ENCODE measurements at regions of chr1 and their contacts with region 1.

Region 1: DNA sequence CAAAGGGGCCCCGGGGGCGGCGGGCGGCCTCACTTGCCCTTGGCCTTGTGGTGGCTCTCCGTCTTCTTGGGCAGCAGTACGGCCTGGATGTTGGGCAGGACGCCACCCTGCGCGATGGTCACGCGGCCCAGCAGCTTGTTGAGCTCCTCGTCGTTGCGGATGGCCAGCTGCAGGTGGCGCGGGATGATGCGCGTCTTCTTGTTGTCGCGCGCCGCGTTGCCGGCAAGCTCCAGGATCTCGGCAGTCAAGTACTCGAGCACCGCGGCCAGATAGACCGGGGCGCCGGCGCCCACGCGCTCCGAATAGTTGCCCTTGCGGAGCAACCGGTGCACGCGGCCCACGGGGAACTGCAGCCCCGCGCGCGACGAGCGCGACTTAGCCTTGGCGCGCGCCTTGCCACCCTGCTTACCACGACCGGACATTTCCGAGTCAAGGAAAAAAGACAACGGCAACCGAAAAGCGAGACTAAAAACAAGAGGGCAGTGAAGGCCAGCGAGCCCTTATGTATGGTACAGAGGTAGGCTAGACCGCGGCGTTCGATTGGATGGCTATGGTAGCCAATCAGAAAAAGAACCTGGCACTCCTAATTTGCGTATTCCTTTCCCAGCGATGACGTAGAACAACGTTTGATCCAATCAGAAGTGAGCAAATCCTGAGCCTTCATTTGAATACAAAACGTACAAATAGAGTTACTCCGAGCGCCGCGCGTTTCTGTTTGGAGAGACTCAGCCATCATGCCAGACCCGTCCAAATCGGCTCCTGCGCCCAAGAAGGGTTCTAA is 29.6 kb upstream of the RNF187 start:
- DNase-seq: peak; percentile 87
- ATAC-seq: peak; percentile 85
- H3K4me3 Mint-ChIP-seq: peak overlapping the region; percentile 98
- H3K27ac Mint-ChIP-seq: peak overlapping the region; percentile 98
- H3K4me1 Mint-ChIP-seq: peaks cover 43% of the 10 kb centered on the region
- H3K27me3 Mint-ChIP-seq: no peaks in the 10 kb centered on the region

Region 2: DNA sequence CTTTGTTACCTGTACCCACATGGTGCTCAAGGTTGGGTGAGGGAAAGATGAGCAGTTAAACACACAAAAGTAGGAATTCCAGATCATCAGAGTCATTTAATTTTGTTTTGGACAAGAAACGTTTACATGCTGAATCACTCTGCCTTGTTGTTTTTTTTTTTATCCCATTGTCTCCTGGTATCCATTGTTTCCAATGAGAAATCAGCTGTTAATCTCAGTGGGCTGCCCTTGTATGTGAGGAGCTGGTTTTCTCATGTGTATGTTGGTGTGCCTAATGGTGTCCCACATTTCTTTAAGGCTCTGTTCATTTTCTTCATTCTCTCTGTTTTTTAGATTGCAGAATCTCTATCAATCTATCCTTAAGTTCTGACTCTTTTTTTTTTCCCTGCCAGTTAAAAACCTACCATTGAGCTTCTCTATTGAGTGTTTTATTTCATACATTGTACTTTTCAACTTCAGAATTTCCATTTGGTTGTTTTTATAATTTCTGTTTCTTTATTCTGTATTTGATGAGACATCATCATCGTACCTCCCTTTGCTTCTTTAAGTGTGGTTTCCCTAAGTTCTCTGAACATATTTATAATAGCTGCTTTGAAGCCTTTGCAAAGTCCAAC is 258.5 kb before region 1 on chr1:
- POLR2A ChIA-PET with region 1: no interaction called
- DNase-seq: no peak
- ATAC-seq: no peak
- H3K4me3 Mint-ChIP-seq: no peak overlapping the region
- H3K27ac Mint-ChIP-seq: no peak overlapping the region
- H3K4me1 Mint-ChIP-seq: no peaks in the 10 kb centered on the region
- H3K27me3 Mint-ChIP-seq: peaks cover 10% of the 10 kb centered on the region

Region 3: GRCh38 chr1:228275739-228276421 is 181.7 kb before region 1 on chr1:
- POLR2A ChIA-PET with region 1: interaction called, 11 read pairs
- DNase-seq: peak; percentile 85
- ATAC-seq: peak; percentile 93
- H3K4me3 Mint-ChIP-seq: peak overlapping the region; percentile 77
- H3K27ac Mint-ChIP-seq: peak overlapping the region; percentile 61
- H3K4me1 Mint-ChIP-seq: peaks cover 6% of the 10 kb centered on the region
- H3K27me3 Mint-ChIP-seq: no peaks in the 10 kb centered on the region

Region 4: GRCh38 chr1:228471762-228472398 is 14.3 kb after region 1 on chr1:
- POLR2A ChIA-PET with region 1: interaction called, 31 read pairs
- DNase-seq: no peak
- ATAC-seq: peak; percentile 84
- H3K4me3 Mint-ChIP-seq: peak overlapping the region; percentile 34
- H3K27ac Mint-ChIP-seq: peak overlapping the region; percentile 77
- H3K4me1 Mint-ChIP-seq: peaks cover 37% of the 10 kb centered on the region
- H3K27me3 Mint-ChIP-seq: peaks cover 30% of the 10 kb centered on the region

Region 5: DNA sequence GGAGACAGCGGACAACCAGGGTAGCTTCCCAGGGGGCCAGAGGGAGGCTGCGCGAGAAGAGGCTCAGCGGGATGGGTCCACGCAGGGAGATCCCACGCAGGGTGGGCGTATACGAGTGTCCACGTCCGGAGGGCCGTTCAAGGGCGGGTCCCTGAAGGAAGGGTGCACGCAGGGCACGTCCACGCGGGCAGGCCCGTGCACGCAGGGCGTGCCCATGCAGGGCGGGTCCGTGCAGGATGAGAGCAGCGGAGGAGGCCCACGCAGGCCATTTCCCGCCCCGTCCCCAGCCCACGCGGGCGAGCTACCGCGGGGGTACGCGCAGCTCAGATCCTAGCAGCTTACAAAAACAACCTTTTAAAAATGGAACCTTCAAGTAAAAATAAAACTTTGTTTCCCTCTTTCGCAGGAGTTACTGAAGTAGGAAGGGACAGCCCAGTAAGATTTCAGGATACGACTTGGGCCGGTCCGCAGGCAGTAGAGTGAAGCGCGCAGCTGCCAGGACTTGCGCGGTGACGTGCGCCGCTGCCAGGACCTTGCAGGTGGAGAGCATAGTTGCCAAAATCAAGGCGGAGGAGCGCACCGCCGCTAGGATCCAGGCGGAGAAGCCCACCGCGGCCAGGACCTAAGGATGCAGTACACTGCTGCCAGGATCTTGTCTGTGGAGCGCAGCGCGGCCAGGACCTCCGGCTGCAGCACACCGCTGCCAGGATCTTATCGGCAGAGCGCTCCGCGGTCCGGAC is 29.2 kb after region 1 on chr1:
- POLR2A ChIA-PET with region 1: interaction called, 111 read pairs
- DNase-seq: peak; percentile 81
- ATAC-seq: peak; percentile 67
- H3K4me3 Mint-ChIP-seq: peak overlapping the region; percentile 98
- H3K27ac Mint-ChIP-seq: peak overlapping the region; percentile 100
- H3K4me1 Mint-ChIP-seq: peaks cover 42% of the 10 kb centered on the region
- H3K27me3 Mint-ChIP-seq: no peaks in the 10 kb centered on the region

Region 6: GRCh38 chr1:228513236-228513900 is 55.8 kb after region 1 on chr1:
- POLR2A ChIA-PET with region 1: interaction called, 16 read pairs
- DNase-seq: no peak
- ATAC-seq: no peak
- H3K4me3 Mint-ChIP-seq: no peak overlapping the region
- H3K27ac Mint-ChIP-seq: no peak overlapping the region
- H3K4me1 Mint-ChIP-seq: peaks cover 31% of the 10 kb centered on the region
- H3K27me3 Mint-ChIP-seq: peaks cover 42% of the 10 kb centered on the region

Measured in activated naive CD8-positive, alpha-beta T cell treated with anti-CD3 and anti-CD28 coated beads, Interleukin-2, amount 10 ng/mL, durations not matched to agents 7 days and 5 days (primary cell).